GM10248 (cell line): ENCODE measurements at regions of chr3 and their contacts with region 1.

Region 1: GRCh38 chr3:69161587-69162307 is 39.4 kb upstream of the LMOD3 start:
- DNase-seq: peak; percentile 62
- CTCF ChIP-seq: peak; percentile 91

Region 2: GRCh38 chr3:69092030-69092516 is 69.7 kb before region 1 on chr3:
- CTCF ChIA-PET with region 1: no interaction called
- POLR2A ChIA-PET with region 1: no interaction called
- DNase-seq: no peak
- CTCF ChIP-seq: no peak

Region 3: DNA sequence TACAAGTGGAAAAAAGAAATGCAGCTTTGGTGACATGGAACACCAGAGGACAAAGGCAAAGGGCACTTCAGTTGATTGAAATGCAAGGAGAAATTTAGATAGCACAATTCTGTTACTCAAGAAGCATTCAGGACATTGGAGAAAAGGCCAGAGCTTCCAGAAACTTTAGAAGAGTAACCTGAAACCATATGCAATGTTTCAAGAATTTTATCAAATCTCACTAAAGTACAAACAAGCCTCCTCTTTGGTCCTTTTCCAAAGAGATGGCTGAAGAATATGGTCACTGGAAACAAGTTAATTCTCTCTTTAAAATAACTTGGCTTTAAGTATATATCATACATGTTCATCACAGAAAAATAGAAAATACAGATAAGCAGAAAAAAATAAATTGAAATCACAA is 24.7 kb before region 1 on chr3:
- CTCF ChIA-PET with region 1: interaction called, 12 read pairs
- POLR2A ChIA-PET with region 1: no interaction called
- DNase-seq: no peak
- CTCF ChIP-seq: no peak

Region 4: DNA sequence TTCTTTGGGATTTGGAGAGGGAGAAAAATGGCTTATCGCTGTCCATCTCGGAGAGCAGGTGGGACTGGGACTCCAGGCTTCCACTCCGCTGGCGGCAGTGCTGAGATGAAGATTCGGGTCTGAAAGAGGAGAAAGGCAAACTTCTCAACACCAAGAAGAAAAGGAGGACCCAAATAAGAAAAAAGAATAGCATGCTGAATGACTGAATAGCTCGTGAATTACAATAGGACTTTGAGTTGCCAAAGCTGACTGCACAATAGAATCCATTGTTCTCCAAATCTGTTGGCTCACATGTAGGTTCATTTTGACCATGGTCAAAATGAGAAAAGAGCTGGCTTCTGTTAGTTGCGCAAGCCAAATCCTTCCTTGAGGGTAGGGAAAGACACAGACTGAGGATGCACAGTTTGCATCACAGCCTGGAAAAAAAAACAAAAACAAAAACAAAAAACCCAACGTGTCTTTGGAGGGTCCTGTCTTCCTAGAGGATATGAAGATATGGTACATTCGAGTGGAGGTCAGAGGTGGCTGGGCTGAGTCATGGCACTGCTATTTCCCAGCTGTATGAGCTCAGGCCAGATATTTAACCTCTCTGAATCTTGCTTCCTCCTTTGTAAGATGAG is 20.0 kb after region 1 on chr3:
- CTCF ChIA-PET with region 1: interaction called, 12 read pairs
- POLR2A ChIA-PET with region 1: no interaction called
- DNase-seq: no peak
- CTCF ChIP-seq: no peak

Region 5: DNA sequence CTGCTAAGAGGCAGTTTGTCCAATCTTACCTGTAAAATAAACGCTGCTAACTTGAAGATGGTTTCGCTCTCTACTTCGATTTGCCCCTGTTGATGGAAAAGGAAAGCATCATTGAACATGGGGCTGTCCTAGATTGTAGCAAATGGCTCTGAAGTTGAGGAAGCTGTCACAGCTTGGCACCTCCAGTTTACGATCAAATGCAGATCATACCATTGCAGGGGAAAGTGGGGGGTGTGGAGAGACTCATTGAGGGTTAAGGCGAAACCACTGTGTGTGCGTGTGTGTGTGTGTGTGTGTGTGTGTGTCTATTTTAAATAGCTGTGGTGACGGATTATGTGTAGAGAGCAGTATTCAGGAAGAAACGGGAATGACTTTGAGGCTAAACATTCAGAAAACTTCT is 88.3 kb after region 1 on chr3:
- CTCF ChIA-PET with region 1: interaction called, 10 read pairs
- POLR2A ChIA-PET with region 1: no interaction called
- DNase-seq: no peak
- CTCF ChIP-seq: no peak

Region 6: DNA sequence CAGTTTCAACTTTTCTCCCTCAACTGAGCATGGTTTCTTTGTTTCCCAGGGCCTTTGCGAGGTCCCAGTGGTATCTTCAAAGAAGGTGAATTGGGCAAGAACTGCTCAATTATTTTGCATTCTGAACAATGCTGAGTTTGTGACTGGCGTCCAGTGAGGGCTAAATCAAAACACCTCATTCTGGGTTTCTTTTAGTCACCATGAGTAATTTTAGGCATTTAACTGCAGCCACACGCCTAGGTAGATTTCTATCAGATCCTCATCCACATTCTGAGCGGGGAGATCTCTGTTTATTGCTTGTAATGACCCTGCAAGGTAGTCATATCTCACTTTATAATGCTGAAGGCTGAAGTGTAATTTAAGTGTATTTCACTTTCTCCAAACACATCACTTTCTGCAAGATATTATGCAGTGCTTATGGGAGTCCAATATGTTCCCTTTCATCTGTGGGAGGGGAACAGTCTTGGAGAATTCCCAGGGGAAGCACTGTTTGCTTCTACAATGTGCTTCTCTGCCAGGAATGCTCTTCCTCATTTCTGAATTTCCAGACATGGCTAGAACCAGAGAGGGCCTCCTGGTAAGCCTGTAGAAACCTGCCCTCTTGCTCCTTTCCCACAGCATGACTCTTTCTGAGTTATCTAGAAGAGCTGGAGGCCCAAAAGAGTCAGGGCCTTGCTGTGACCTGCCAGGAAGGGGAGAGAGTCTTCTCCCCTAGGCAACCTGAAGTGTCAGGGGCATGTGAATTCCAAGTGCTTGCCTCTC is 132.4 kb after region 1 on chr3:
- CTCF ChIA-PET with region 1: interaction called, 26 read pairs
- POLR2A ChIA-PET with region 1: no interaction called
- DNase-seq: peak; percentile 20
- CTCF ChIP-seq: no peak

Region 7: DNA sequence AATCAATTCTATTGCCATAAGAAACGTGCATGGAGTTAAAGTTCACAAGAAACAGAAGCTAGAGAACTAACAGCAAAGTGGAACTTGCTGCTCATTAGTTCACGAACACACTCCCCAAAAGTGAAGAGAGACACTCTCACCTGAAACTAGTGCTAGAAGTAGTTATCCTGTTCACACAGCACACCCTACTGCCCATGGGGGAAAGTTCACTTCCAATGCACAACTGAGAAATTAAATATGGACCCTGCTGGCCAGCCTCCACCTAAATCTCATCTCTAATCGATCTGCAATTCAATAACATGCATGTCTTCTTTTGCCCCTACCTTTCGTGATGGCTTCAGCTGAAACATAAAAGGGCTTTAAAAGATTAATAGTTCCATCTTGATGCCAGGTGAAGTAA is 263.5 kb after region 1 on chr3:
- CTCF ChIA-PET with region 1: interaction called, 62 read pairs
- POLR2A ChIA-PET with region 1: no interaction called
- DNase-seq: peak; percentile 37
- CTCF ChIP-seq: peak; percentile 51

Region 8: DNA sequence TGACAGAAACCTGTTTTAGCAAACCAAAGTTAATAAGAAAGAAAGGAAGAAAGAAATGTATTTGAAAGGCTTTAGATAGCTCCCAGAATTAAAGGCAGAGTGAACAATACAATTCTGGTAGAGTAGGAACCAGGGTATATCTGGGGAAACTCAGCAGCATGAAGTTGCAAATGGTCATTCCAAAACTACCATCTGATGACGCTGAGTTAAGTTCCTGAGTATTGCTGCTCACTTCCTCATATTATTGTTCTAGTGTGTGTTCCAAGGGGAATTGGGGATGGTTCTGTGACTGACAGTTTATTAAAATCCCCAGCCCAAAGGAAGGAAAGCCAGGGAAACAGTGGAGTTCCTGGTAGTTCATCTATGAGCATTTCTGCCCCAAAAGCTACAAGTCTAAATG is 312.4 kb after region 1 on chr3:
- CTCF ChIA-PET with region 1: no interaction called
- POLR2A ChIA-PET with region 1: no interaction called
- DNase-seq: no peak
- CTCF ChIP-seq: no peak

Region 9: DNA sequence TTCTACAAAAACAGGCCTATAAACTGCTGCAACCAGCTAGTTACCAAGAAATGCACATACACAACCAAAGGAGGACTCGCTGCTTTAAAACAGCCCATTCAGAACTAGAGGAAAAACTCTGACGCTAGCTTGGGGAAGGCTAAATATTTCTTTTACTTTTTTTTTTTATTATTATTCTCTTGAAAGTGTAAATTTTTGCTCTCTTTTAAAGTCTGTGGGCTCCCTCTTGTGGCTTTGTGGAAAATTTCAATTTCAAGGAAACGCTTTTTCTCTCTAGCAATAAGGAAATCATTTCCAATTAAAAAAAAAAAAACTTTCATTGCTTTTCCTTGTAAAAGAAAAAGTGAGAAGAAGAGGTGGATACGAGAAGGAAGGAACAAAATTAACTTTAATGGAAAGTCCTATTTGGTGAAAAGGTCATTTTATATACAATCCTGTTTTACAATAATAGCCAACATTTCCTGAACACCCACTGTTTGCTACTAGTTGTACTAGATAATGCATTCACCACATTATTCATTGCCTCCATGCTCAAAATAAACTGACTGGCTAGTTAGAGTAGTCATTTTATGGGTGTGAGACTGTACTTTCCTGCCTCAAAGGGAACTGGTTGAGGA is 786.6 kb after region 1 on chr3:
- CTCF ChIA-PET with region 1: interaction called, 10 read pairs
- POLR2A ChIA-PET with region 1: no interaction called
- DNase-seq: peak; percentile 10
- CTCF ChIP-seq: peak; percentile 20